Activated CD8-positive, alpha-beta T cell treated with anti-CD3 and anti-CD28 coated beads for 36 hours (primary cell): ENCODE measurements at regions of chr6 and their contacts with region 1.

Region 1: DNA sequence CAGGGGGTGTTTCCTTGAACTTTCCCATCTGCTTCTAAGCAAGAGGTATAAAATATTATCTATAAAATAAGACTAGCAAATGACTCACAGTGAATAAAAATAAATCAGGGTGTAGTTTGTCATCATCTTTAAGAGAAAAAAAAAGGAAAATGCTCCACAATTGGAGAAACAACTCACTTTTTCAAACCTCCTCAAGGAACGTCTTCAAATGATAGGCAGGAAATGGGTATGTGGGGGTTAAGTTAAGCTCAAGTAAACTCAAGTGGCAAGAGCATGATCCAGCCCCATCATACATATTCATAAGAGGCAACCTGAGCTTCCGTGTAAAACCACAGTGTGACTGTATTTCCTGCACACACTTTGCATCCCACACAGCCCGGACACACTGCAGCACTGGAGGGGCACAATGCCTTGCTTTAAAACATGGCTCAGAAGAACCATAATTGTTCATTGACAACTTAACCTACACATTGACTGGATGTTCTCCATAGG is 58.5 kb upstream of the CEP85L start:
- DNase-seq: peak; percentile 90
- ATAC-seq: peak; percentile 76
- H3K4me3 Mint-ChIP-seq: peak overlapping the region; percentile 99
- H3K27ac Mint-ChIP-seq: peak overlapping the region; percentile 98
- H3K4me1 Mint-ChIP-seq: peaks cover 71% of the 10 kb centered on the region
- H3K27me3 Mint-ChIP-seq: no peaks in the 10 kb centered on the region
- CTCF ChIP-seq: no peak

Region 2: DNA sequence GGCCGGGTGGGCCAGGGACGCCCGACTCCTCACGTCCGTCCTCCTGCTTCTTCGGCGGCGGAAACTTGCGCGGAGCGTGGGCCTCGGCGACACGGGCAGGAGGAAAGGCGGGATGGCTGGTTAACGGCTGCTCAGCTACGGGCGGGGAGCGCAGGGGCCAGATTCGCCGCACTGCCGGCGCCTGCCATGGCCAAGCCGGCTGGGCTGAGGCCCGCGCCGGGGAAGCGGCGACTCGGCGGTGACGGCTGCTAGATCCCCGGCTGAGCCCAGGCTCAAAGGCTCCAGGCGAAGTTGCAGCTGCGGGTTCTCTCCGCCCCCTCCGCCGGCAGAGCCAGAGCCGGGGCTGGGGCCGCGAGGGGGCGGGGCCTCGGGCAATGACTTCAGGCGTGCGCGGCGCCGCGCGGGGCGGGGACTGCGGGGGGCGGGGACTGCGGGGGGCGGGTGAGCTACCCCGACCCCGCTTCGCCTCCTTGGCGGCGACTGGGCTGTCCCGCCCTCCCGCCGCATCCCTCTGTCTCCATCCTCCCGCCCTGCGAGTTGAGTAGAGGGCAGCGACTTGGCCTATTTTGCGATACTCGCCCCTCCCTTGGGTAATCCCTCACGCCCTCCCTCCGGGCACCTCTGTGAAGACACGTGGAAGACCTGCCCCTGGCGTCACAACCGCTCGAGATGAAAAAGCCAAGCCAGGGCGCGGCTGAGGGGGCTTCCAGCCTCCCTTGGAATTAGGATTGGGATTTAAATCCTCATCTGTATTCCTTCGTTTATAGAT is 58.4 kb before region 1 on chr6 and contains the start of gene CEP85L:
- CTCF ChIA-PET with region 1: interaction called, 3 read pairs
- POLR2A ChIA-PET with region 1: interaction called, 10 read pairs
- intact Hi-C with region 1: no loop called
- DNase-seq: peak; percentile 92
- ATAC-seq: peak; percentile 92
- H3K4me3 Mint-ChIP-seq: peak within 1 kb of the TSS; percentile 93
- H3K27ac Mint-ChIP-seq: peak within 1 kb of the TSS; percentile 96
- H3K4me1 Mint-ChIP-seq: peaks cover 61% of the 10 kb centered on the region
- H3K27me3 Mint-ChIP-seq: no peaks in the 10 kb centered on the region
- CTCF ChIP-seq: no peak
- total RNA-seq, gene CEP85L: 39.6 to 40.3 TPM

Region 3: DNA sequence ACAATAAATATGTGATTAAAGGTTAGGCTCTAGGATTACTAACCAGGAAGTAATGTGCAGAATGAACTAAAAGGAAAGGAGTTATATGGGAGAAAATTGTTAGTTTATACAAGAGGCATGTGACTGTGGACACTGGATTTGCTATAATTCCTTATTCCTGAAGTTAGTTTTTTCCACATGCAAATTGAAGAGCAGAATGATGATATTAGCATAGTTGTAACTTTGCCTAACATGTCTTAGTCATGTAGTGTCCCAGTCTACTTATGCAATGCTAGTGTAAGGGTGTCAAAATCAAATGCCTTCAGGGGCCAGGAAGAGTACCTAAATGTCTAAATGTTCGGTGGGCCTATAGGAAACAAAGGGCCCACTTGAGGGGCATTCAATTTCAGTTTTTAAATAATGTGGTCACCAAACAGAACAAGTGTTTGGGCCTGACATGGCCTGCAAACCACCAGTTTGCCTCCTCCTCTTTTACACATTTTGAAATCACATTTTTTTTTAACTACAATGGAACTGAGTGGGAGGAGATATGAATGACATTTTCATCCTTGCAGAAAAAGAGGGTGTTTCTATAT is 30.5 kb before region 1 on chr6:
- CTCF ChIA-PET with region 1: interaction called, 4 read pairs
- POLR2A ChIA-PET with region 1: interaction called, 9 read pairs
- intact Hi-C with region 1: loop called (anchors 2 kb)
- DNase-seq: peak; percentile 21
- ATAC-seq: peak; percentile 31
- H3K4me3 Mint-ChIP-seq: no peak overlapping the region
- H3K27ac Mint-ChIP-seq: peak overlapping the region; percentile 88
- H3K4me1 Mint-ChIP-seq: peaks cover 64% of the 10 kb centered on the region
- H3K27me3 Mint-ChIP-seq: no peaks in the 10 kb centered on the region
- CTCF ChIP-seq: no peak

Region 4: GRCh38 chr6:118697554-118697953 is 12.4 kb before region 1 on chr6:
- CTCF ChIA-PET with region 1: interaction called, 10 read pairs
- POLR2A ChIA-PET with region 1: interaction called, 18 read pairs
- intact Hi-C with region 1: no loop called
- DNase-seq: no peak
- ATAC-seq: no peak
- H3K4me3 Mint-ChIP-seq: no peak overlapping the region
- H3K27ac Mint-ChIP-seq: no peak overlapping the region
- H3K4me1 Mint-ChIP-seq: peaks cover 81% of the 10 kb centered on the region
- H3K27me3 Mint-ChIP-seq: no peaks in the 10 kb centered on the region
- CTCF ChIP-seq: no peak

Region 5: DNA sequence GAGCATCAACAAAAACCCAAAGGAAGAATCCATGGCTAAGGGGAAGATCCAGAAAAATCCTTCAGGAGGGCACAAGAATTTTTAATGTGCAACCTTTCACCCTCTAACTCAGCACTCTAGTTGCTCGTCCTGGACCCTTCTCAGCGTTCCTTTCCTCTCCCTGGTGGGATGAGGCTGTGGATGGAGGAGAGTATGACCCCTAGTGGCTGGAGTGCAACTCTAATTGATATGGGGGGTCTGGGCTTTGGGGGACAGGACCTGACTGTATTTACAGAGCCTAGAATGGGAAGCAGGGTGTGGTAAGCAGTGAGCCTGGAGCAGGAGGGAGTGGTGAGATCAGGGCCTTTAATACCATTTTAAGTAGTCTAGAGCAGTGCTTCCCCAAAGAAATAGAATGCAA is 25.4 kb after region 1 on chr6:
- CTCF ChIA-PET with region 1: interaction called, 4 read pairs
- POLR2A ChIA-PET with region 1: interaction called, 11 read pairs
- intact Hi-C with region 1: no loop called
- DNase-seq: no peak
- ATAC-seq: no peak
- H3K4me3 Mint-ChIP-seq: no peak overlapping the region
- H3K27ac Mint-ChIP-seq: peak overlapping the region; percentile 65
- H3K4me1 Mint-ChIP-seq: peaks cover 43% of the 10 kb centered on the region
- H3K27me3 Mint-ChIP-seq: no peaks in the 10 kb centered on the region
- CTCF ChIP-seq: peak; percentile 46

Region 6: DNA sequence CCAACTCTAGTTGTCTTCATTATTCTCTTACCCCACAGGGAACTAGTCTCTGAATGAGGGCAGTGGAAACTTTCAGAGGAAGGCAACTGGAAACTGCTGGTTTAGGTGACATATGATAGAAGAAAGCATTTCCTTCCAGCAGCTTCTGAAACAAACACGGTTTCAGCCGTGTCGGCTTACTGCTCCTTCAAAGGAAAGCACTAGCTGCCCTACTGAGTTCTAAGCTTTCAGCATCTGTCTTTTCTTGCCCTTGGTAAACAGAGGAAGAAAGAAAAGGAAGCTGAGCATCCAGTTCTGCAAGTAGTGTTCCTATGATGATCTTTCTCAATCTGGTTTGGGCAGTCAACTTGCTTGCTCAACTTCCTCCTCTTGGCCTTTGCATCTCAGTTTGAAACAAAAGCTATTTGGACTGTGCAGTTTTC is 59.0 kb after region 1 on chr6:
- CTCF ChIA-PET with region 1: interaction called, 3 read pairs
- POLR2A ChIA-PET with region 1: interaction called, 12 read pairs
- intact Hi-C with region 1: no loop called
- DNase-seq: peak; percentile 71
- ATAC-seq: peak; percentile 82
- H3K4me3 Mint-ChIP-seq: peak overlapping the region; percentile 34
- H3K27ac Mint-ChIP-seq: peak overlapping the region; percentile 92
- H3K4me1 Mint-ChIP-seq: peaks cover 28% of the 10 kb centered on the region
- H3K27me3 Mint-ChIP-seq: no peaks in the 10 kb centered on the region
- CTCF ChIP-seq: no peak

Region 7: DNA sequence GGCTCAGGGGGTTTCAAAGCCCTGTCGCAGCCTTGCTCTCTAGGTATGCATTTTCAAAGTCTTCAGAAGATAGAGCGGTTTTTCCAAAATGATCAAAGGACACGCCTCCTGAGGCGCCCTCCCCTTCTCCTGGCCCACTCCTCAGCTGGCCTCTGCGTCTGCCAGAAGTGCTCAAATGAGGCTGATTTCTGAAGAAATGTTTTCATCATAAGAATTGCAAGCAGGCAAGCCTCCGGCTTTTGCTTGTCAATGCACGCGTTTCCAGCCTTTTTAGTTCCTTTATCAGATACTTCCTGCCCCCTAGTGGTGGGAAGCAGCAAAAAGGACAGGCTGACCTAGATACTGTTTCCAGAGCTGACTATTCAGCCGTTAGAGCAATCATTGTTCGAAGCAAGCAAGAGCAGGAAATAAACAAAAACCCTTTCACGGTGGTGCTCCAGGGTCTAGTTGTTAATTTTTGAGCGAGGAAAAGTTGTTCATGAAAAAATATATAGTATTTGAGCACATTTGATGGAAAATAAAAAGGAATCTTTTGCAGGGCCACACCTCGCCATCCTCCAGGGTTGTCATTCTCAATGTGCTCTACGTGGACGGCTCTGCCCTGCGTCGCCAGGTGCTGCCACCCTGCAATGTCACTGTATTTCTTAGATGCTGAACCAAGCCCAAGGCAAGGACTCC is 90.6 kb after region 1 on chr6:
- CTCF ChIA-PET with region 1: interaction called, 21 read pairs
- POLR2A ChIA-PET with region 1: interaction called, 3 read pairs
- intact Hi-C with region 1: no loop called
- DNase-seq: peak; percentile 95
- ATAC-seq: peak; percentile 97
- H3K4me3 Mint-ChIP-seq: peak overlapping the region; percentile 63
- H3K27ac Mint-ChIP-seq: peak overlapping the region; percentile 76
- H3K4me1 Mint-ChIP-seq: peaks cover 34% of the 10 kb centered on the region
- H3K27me3 Mint-ChIP-seq: no peaks in the 10 kb centered on the region
- CTCF ChIP-seq: peak; percentile 85